ENCODE measurements at regions of chr3 and their contacts with region 1.

Region 1: GRCh38 chr3:94004301-94004910 is 24.0 kb downstream of the STX19 start:
- DNase-seq: peak; percentile 53
- H3K4me3 ChIP-seq: peak overlapping the region; percentile 41
- H3K27ac ChIP-seq: no peak overlapping the region
- H3K27me3 ChIP-seq: no peaks in the 10 kb centered on the region
- CTCF ChIP-seq: peak; percentile 93

Region 2: GRCh38 chr3:93988283-93988682 is 16.1 kb before region 1 on chr3:
- CTCF ChIA-PET with region 1: interaction called, 11 read pairs
- POLR2A ChIA-PET with region 1: interaction called, 7 read pairs
- DNase-seq: no peak
- H3K4me3 ChIP-seq: no peak overlapping the region
- H3K27ac ChIP-seq: no peak overlapping the region
- H3K27me3 ChIP-seq: no peaks in the 10 kb centered on the region
- CTCF ChIP-seq: no peak

Region 3: GRCh38 chr3:94015025-94015424 is 10.6 kb after region 1 on chr3:
- CTCF ChIA-PET with region 1: interaction called, 10 read pairs
- POLR2A ChIA-PET with region 1: no interaction called
- DNase-seq: no peak
- H3K4me3 ChIP-seq: no peak overlapping the region
- H3K27ac ChIP-seq: no peak overlapping the region
- H3K27me3 ChIP-seq: no peaks in the 10 kb centered on the region
- CTCF ChIP-seq: no peak

Region 4: DNA sequence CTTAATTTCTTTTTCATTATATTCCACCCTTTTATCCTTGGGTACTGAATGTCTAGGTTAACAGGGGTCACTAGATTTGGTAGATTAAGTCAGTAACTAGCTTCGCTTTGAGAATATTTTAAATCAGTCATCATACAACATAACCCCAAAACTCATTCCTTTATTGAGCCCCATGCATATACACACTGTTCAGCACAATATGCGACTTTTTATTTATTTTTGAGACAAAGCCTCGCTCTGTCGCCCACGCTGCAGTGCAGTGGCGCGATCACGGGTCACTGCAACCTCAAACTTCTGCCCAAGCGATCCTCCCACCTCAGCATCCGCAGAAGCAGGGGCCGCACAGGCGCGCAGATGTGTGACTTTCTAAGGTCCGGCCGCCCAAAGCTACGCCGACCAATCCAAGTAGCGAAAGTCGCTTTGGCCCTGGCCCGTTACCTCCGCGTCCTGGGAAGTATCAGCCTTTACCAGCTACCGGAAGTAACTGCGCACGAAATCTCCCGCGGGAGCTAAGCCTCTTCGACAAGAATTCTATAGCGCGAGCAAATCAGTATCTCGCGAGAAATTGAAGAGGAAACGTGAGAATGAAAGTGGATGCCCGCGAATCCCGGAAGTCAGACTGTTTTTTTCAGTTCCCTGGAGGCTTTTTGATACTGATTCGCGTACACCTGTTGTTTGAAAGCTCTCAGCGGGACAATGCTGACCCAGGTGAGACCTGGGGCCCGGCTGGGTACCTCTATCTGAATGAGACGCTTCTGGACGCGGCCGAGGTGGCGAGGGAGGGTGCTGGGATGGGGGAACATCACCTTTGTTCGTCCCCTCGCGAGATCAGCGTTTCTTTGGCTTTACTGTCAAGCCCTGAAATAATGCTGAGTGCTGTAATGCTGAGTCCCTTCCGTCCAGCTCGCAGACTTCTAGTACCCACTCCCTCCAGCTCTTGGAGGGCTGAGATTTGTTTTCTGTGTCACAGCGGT is 58.3 kb after region 1 on chr3 and contains the starts of genes DHFR2 and NSUN3:
- CTCF ChIA-PET with region 1: interaction called, 145 read pairs
- POLR2A ChIA-PET with region 1: no interaction called
- DNase-seq: peak; percentile 96
- H3K4me3 ChIP-seq: peak within 1 kb of the TSS; percentile 87
- H3K27ac ChIP-seq: peak within 1 kb of the TSS; percentile 99
- H3K27me3 ChIP-seq: no peaks in the 10 kb centered on the region
- CTCF ChIP-seq: no peak
- polyA plus RNA-seq, gene DHFR2: 3.4 and 4.0 TPM in 2 replicates
- polyA plus RNA-seq, gene NSUN3: 7.5 and 7.7 TPM in 2 replicates

Region 5: DNA sequence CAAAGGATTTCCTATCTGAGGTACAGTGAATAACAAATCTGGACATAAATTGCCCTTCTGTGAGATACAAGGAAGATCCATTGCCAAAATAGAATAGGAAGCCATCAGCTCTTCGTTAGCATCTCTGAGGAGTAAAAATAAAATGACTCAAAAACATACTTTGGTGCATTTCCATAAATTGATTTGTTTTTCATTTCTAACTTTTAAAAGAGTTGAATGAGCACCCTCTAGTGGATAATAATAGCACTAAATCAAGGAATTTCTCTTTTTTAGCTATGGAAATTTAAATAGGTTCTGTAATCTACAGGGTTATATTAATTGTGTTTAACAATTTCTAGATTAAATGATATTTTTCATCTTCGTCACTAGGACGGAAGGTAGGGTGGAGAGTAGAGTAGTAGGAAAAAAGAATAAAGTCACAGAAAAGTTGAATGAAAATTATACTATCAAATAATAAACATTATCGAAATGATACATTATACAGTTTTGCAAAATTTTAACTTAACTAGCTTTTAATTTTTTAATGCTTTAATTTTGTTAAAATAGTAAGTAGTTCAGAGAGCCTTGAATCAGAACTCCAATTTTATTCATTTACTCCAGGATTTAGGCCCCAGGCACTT is 64.9 kb after region 1 on chr3:
- CTCF ChIA-PET with region 1: interaction called, 145 read pairs
- POLR2A ChIA-PET with region 1: no interaction called
- DNase-seq: no peak
- H3K4me3 ChIP-seq: no peak overlapping the region
- H3K27ac ChIP-seq: no peak overlapping the region
- H3K27me3 ChIP-seq: no peaks in the 10 kb centered on the region
- CTCF ChIP-seq: peak; percentile 54

Region 6: DNA sequence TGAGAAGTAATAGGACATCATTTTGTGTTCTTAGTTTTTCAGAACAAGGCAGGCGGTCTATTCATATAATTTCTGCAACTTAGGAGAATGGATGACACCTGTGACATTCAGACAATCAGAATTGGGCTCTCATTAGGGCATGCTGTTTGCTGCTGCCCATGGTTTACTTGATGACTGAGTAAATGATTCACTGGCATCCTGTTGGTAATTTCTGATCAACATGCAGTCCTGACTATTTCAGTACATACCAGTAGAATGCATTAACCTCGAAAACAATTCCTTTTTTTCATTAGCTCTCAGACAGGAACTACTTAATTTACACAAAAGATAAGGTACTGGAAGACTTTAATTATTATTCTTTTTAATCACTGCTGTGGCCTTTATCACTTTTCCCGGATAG is 700.1 kb after region 1 on chr3:
- CTCF ChIA-PET with region 1: no interaction called
- POLR2A ChIA-PET with region 1: no interaction called
- DNase-seq: no peak
- H3K4me3 ChIP-seq: no peak overlapping the region
- H3K27ac ChIP-seq: no peak overlapping the region
- H3K27me3 ChIP-seq: no peaks in the 10 kb centered on the region
- CTCF ChIP-seq: no peak